CD8-positive, alpha-beta memory T cell (primary cell): ENCODE measurements at regions of chr9 and their contacts with region 1.

Region 1: GRCh38 chr9:136410500-136411287 is at the starts of genes ENTR1 and PMPCA:
- DNase-seq: peak; percentile 91 to 96 (median 93)
- H3K4me3 ChIP-seq: peak within 1 kb of the TSS; percentile 93
- H3K4me3 Mint-ChIP-seq: peak within 1 kb of the TSS; percentile 88 to 98 (median 91)
- H3K27ac ChIP-seq: peak within 1 kb of the TSS; percentile 93
- H3K27ac Mint-ChIP-seq: peak within 1 kb of the TSS; percentile 86 to 98 (median 93)
- H3K4me1 ChIP-seq: peaks cover 29% of the 10 kb centered on the region
- H3K4me1 Mint-ChIP-seq: peaks cover 30 to 52% (median 41%) of the 10 kb centered on the region in 3 donors
- H3K27me3 ChIP-seq: no peaks in the 10 kb centered on the region
- H3K27me3 Mint-ChIP-seq: no peaks in the 10 kb centered on the region
- total RNA-seq, gene ENTR1: 52.2 to 55.5 TPM
- total RNA-seq, gene PMPCA: 96.4 to 101 TPM

Region 2: GRCh38 chr9:136160381-136160841 is 250.3 kb before region 1 on chr9:
- CTCF ChIA-PET with region 1: no interaction called
- POLR2A ChIA-PET with region 1: no interaction called
- DNase-seq: no peak
- H3K4me3 ChIP-seq: no peak overlapping the region
- H3K4me3 Mint-ChIP-seq: no peak overlapping the region
- H3K27ac ChIP-seq: no peak overlapping the region
- H3K27ac Mint-ChIP-seq: no peak overlapping the region
- H3K4me1 ChIP-seq: no peaks in the 10 kb centered on the region
- H3K4me1 Mint-ChIP-seq: no peaks in the 10 kb centered on the region
- H3K27me3 ChIP-seq: no peaks in the 10 kb centered on the region
- H3K27me3 Mint-ChIP-seq: peaks cover 3 to 11% of the 10 kb centered on the region in 2 donors

Region 3: GRCh38 chr9:136400038-136400834 is 10.5 kb before region 1 on chr9 and contains the start of gene SNAPC4:
- CTCF ChIA-PET with region 1: interaction called, 13 read pairs
- POLR2A ChIA-PET with region 1: no interaction called
- DNase-seq: peak; percentile 81 to 90 (median 83)
- H3K4me3 ChIP-seq: peak within 1 kb of the TSS; percentile 80
- H3K4me3 Mint-ChIP-seq: peak within 1 kb of the TSS; percentile 82 to 94 (median 85)
- H3K27ac ChIP-seq: peak within 1 kb of the TSS; percentile 54
- H3K27ac Mint-ChIP-seq: peak within 1 kb of the TSS in 7 of 8 donors; percentile 58 to 86 (median 81)
- H3K4me1 ChIP-seq: peaks cover 48% of the 10 kb centered on the region
- H3K4me1 Mint-ChIP-seq: peaks cover 40 to 54% (median 41%) of the 10 kb centered on the region in 3 donors
- H3K27me3 ChIP-seq: no peaks in the 10 kb centered on the region
- H3K27me3 Mint-ChIP-seq: no peaks in the 10 kb centered on the region
- total RNA-seq, gene SNAPC4: 22.1 to 23.6 TPM